IMR-90 (cell line): ENCODE measurements at regions of chr6 and their contacts with region 1.

Region 1: DNA sequence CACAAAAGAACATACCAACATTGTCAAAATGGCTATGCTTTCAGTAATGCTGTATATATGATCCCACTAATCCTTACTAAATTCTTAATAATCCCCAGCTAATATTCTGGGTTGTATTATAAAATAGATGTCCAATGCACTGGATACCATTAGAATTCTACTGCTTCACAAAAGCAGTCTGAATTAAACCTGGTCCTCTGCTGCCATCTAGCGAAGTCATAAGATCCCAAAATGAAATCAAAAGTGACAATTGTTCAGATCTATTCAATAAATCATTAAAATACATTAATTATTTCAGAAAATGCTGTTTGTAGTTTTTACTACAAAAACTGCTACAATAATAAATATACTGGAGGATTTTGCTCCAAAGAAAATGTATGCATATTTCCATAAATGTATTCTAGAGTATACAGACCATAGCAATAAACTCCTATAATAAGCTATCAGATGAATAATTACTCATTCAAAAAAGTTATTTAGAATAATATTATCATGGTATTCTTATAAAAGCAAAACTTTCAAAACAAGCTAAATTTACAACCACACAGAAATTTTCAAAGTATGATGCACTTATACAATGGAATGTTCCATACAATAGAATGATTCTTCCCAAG is 92.6 kb downstream of the RNGTT start:
- DNase-seq: peak; percentile 74
- ATAC-seq: no peak
- H3K4me3 ChIP-seq: no peak overlapping the region
- H3K27ac ChIP-seq: no peak overlapping the region
- H3K4me1 ChIP-seq: peaks cover 7% of the 10 kb centered on the region
- H3K27me3 ChIP-seq: no peaks in the 10 kb centered on the region
- CTCF ChIP-seq: peak; percentile 77
- POLR2A ChIP-seq: no peak
- RAD21 ChIP-seq: peak; percentile 81

Region 2: DNA sequence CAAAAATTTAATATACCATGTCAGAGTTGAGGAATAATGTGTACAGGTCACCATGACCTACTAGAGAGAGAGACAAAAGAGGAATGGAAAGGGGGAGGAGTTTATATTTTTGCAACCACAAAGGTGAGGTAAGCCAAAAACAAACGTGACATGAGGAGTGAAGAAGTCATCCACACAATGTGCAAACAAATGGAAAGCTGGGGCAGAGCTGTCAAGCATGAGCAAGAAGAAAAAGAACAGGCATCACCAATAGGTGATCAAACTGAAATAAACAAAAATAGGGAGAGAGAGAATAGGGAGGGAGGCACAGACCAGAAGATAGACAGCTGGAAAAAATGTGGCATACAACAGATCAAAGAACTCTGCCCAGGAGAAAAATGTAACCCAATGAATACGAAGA is 1296.5 kb before region 1 on chr6:
- CTCF ChIA-PET with region 1: no interaction called
- POLR2A ChIA-PET with region 1: no interaction called
- dilution Hi-C with region 1: no loop called
- in situ Hi-C with region 1: loop called (anchors 25 kb)
- intact Hi-C with region 1: no loop called
- DNase-seq: no peak
- ATAC-seq: no peak
- H3K4me3 ChIP-seq: no peak overlapping the region
- H3K27ac ChIP-seq: no peak overlapping the region
- H3K4me1 ChIP-seq: peaks cover 27% of the 10 kb centered on the region
- H3K27me3 ChIP-seq: no peaks in the 10 kb centered on the region
- CTCF ChIP-seq: no peak
- POLR2A ChIP-seq: no peak
- RAD21 ChIP-seq: no peak

Region 3: DNA sequence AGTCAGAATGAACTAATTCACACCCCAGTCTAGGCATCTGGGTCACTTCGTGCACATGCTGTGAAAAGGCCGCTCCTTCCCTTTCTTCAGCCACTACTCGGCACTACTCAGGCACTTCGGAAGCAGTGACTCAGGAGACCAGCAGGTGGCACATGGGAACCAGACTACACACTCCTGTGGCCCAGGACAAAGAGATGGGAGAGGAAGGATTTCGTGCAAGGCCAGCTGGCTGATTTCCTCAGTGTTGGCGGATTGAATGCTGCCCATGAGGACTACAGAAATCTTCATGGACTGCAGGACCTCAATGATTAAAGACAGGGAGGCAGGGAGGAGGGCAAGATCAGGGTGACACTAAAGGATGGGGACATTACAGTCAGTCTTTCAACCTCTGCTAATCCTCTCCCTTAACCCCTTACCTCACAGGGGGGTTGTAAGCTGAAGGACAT is 941.0 kb before region 1 on chr6:
- CTCF ChIA-PET with region 1: interaction called, 9 read pairs
- POLR2A ChIA-PET with region 1: no interaction called
- dilution Hi-C with region 1: no loop called
- in situ Hi-C with region 1: loop called (anchors 5 kb)
- intact Hi-C with region 1: loop called (anchors 1 kb)
- DNase-seq: peak; percentile 79
- ATAC-seq: peak; percentile 99
- H3K4me3 ChIP-seq: no peak overlapping the region
- H3K27ac ChIP-seq: no peak overlapping the region
- H3K4me1 ChIP-seq: no peaks in the 10 kb centered on the region
- H3K27me3 ChIP-seq: peaks cover 10% of the 10 kb centered on the region
- CTCF ChIP-seq: peak; percentile 79
- POLR2A ChIP-seq: no peak
- RAD21 ChIP-seq: peak; percentile 78

Region 4: DNA sequence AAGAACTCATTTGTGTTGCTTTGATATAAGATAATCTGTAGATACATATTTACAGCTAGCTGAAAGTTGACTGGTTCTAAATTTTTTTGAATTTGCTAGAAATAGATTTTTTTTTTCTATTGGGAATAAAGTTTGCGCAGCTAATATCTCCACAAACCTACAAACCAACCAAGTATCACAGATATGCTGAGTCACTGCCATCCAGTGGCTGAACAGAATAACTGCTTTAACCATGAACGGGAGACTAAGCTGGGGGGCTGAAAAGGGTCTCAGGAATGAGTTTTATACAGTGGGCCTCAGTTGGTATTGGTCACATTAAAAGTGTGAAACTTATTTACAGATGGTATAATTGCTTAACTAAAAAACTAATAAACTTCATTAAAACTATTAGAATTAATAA is 378.0 kb before region 1 on chr6:
- CTCF ChIA-PET with region 1: interaction called, 3 read pairs
- POLR2A ChIA-PET with region 1: no interaction called
- dilution Hi-C with region 1: no loop called
- in situ Hi-C with region 1: no loop called
- intact Hi-C with region 1: loop called (anchors 5 kb)
- DNase-seq: peak; percentile 28
- ATAC-seq: peak; percentile 44; the same call in 1 of the 2 replicates
- H3K4me3 ChIP-seq: no peak overlapping the region
- H3K27ac ChIP-seq: no peak overlapping the region
- H3K4me1 ChIP-seq: no peaks in the 10 kb centered on the region
- H3K27me3 ChIP-seq: no peaks in the 10 kb centered on the region
- CTCF ChIP-seq: peak; percentile 36
- POLR2A ChIP-seq: no peak
- RAD21 ChIP-seq: peak; percentile 32; the same call in 1 of the 2 replicates

Region 5: GRCh38 chr6:88641178-88641903 is 229.5 kb before region 1 on chr6:
- CTCF ChIA-PET with region 1: no interaction called
- POLR2A ChIA-PET with region 1: no interaction called
- dilution Hi-C with region 1: no loop called
- in situ Hi-C with region 1: no loop called
- intact Hi-C with region 1: no loop called
- DNase-seq: peak; percentile 13
- ATAC-seq: peak; percentile 44
- H3K4me3 ChIP-seq: no peak overlapping the region
- H3K27ac ChIP-seq: no peak overlapping the region
- H3K4me1 ChIP-seq: no peaks in the 10 kb centered on the region
- H3K27me3 ChIP-seq: no peaks in the 10 kb centered on the region
- CTCF ChIP-seq: no peak
- POLR2A ChIP-seq: no peak
- RAD21 ChIP-seq: no peak

Region 6: GRCh38 chr6:88835210-88835609 is 35.6 kb before region 1 on chr6:
- CTCF ChIA-PET with region 1: no interaction called
- POLR2A ChIA-PET with region 1: no interaction called
- dilution Hi-C with region 1: no loop called
- in situ Hi-C with region 1: no loop called
- intact Hi-C with region 1: no loop called
- DNase-seq: no peak
- ATAC-seq: no peak
- H3K4me3 ChIP-seq: no peak overlapping the region
- H3K27ac ChIP-seq: no peak overlapping the region
- H3K4me1 ChIP-seq: no peaks in the 10 kb centered on the region
- H3K27me3 ChIP-seq: no peaks in the 10 kb centered on the region
- CTCF ChIP-seq: no peak
- POLR2A ChIP-seq: no peak
- RAD21 ChIP-seq: no peak